SK-N-SH (cell line): ENCODE measurements at regions of chr12 and their contacts with region 1.

Region 1: GRCh38 chr12:92145731-92146496 is at the start of gene BTG1:
- DNase-seq: peak; percentile 94
- H3K4me3 ChIP-seq: peak within 1 kb of the TSS; percentile 89 to 98
- H3K27ac ChIP-seq: peak within 1 kb of the TSS; percentile 91 to 97
- H3K4me1 ChIP-seq: peaks cover 6 to 10% of the 10 kb centered on the region in 2 experiments; a peak in 3 of 4 replicates
- H3K27me3 ChIP-seq: no peaks in the 10 kb centered on the region
- CTCF ChIP-seq: no peak
- EP300 ChIP-seq: no peak
- RAD21 ChIP-seq: 0 out of 2 replicates have a peak, but pooled peaks have one; percentile 24
- polyA plus RNA-seq, gene BTG1: 16.2 and 28.3 TPM in 2 replicates

Region 2: GRCh38 chr12:91577586-91578539 is 568.1 kb before region 1 on chr12:
- CTCF ChIA-PET with region 1: interaction called, 25 read pairs
- POLR2A ChIA-PET with region 1: interaction called, 23 read pairs
- DNase-seq: peak; percentile 16
- H3K4me3 ChIP-seq: peak overlapping the region; percentile 29 to 38; a peak in 2 of 4 replicates
- H3K27ac ChIP-seq: peak overlapping the region; percentile 8 to 99; a peak in 3 of 4 replicates
- H3K4me1 ChIP-seq: peaks cover 9 to 23% of the 10 kb centered on the region in 2 experiments; a peak in 3 of 4 replicates
- H3K27me3 ChIP-seq: no peaks in the 10 kb centered on the region
- CTCF ChIP-seq: peak; percentile 74
- EP300 ChIP-seq: no peak
- RAD21 ChIP-seq: peak; percentile 66

Region 3: GRCh38 chr12:92108651-92109050 is 37.3 kb before region 1 on chr12:
- CTCF ChIA-PET with region 1: interaction called, 5 read pairs
- POLR2A ChIA-PET with region 1: interaction called, 22 read pairs
- DNase-seq: peak; percentile 20
- H3K4me3 ChIP-seq: no peak overlapping the region
- H3K27ac ChIP-seq: peak overlapping the region; percentile 35 to 99; a peak in 3 of 4 replicates
- H3K4me1 ChIP-seq: peaks cover 27 to 41% of the 10 kb centered on the region in 2 experiments; a peak in 3 of 4 replicates
- H3K27me3 ChIP-seq: no peaks in the 10 kb centered on the region
- CTCF ChIP-seq: no peak
- EP300 ChIP-seq: no peak
- RAD21 ChIP-seq: no peak

Region 4: DNA sequence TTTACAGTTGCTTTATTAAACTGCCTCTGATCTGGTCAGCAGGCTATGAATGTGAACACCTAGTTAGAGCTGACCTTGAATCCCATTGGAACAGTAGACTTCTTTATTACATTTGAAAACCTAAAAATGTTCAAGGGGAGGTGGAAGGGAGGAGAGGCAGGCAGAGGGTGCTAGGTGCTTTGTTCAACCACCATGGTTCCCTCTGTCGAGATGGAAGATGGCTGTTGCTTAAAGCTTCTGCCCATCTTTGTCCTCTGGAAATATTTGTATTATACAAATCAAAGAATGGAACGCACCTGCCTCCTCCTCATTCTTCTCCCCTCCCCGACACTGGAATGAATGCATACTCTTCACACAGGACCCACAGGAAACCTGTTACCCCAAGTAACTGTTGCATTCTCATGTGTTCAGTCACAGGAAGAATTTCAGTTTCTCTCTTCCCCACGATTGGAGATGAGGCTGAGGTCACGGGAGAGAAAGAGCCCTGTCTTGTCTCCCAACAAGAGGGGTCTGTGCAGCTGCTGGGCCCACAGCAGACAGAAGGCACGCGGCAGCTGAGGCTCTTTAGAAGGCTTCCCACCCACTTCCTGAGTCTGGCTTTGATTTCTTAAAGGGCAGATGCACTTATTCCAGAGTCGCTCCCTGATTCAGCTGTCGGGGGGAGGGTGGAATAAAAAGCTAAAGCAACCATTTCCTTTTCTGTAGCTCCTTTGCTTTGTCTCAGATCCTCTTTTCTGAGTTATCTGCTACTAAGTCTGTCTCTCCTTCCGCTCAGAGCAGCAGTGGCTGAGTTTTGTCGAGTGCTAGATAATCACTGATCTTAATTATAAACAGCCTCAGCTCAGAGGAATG is 217.6 kb after region 1 on chr12:
- CTCF ChIA-PET with region 1: interaction called, 7 read pairs
- POLR2A ChIA-PET with region 1: interaction called, 19 read pairs
- DNase-seq: peak; percentile 29
- H3K4me3 ChIP-seq: peak overlapping the region in 1 of 2 experiments; percentile 21; a peak in 1 of 4 replicates
- H3K27ac ChIP-seq: peak overlapping the region in 1 of 2 experiments; percentile 95; a peak in 2 of 4 replicates
- H3K4me1 ChIP-seq: peaks cover 0 to 19% of the 10 kb centered on the region in 2 experiments; a peak in 2 of 4 replicates
- H3K27me3 ChIP-seq: no peaks in the 10 kb centered on the region
- CTCF ChIP-seq: no peak
- EP300 ChIP-seq: no peak
- RAD21 ChIP-seq: 0 out of 2 replicates have a peak, but pooled peaks have one; percentile 1